Heart right ventricle (tissue), 16 donors: ENCODE measurements at regions of chr19 and their contacts with region 1.

Region 1: GRCh38 chr19:10928525-10929401 is at the starts of genes TIMM29 and YIPF2:
- DNase-seq: peak; percentile 94 to 98
- ATAC-seq: peak; percentile 94 to 98 (median 98)
- H3K4me3 ChIP-seq: peak within 1 kb of the TSS; percentile 88 to 100 (median 98)
- H3K27ac ChIP-seq: peak within 1 kb of the TSS; percentile 65 to 93 (median 87)
- H3K4me1 ChIP-seq: peaks cover 10 to 32% (median 20%) of the 10 kb centered on the region in 9 donors
- H3K27me3 ChIP-seq: no peaks in the 10 kb centered on the region
- CTCF ChIP-seq: no peak
- total RNA-seq, gene TIMM29: 10.8 to 16.1 (median 14.5) TPM
- total RNA-seq, gene YIPF2: 13.7 to 26.0 (median 16.9) TPM

Region 2: GRCh38 chr19:10644260-10645007 is 284.3 kb before region 1 on chr19:
- intact Hi-C with region 1: no loop called
- DNase-seq: peak; percentile 89 to 90
- ATAC-seq: peak; percentile 78 to 95 (median 91)
- H3K4me3 ChIP-seq: no peak overlapping the region
- H3K27ac ChIP-seq: peak overlapping the region; percentile 27 to 69 (median 58)
- H3K4me1 ChIP-seq: peaks cover 6 to 45% (median 27%) of the 10 kb centered on the region in 9 donors
- H3K27me3 ChIP-seq: no peaks in the 10 kb centered on the region
- CTCF ChIP-seq: peak; percentile 76 to 94 (median 88)

Region 3: GRCh38 chr19:10870955-10871603 is 57.7 kb before region 1 on chr19 and contains the start of gene CARM1:
- intact Hi-C with region 1: loop called in 7 of 10 experiments (anchors 5 to 10 kb)
- DNase-seq: peak; percentile 99 to 100
- ATAC-seq: peak; percentile 95 to 97 (median 96)
- H3K4me3 ChIP-seq: peak within 1 kb of the TSS; percentile 55 to 99 (median 70)
- H3K27ac ChIP-seq: peak within 1 kb of the TSS; percentile 64 to 90 (median 80)
- H3K4me1 ChIP-seq: peaks cover 5 to 55% (median 21%) of the 10 kb centered on the region in 9 donors
- H3K27me3 ChIP-seq: no peaks in the 10 kb centered on the region
- CTCF ChIP-seq: peak; percentile 40 to 88 (median 68)
- total RNA-seq, gene CARM1: 25.8 to 45.4 (median 28.8) TPM

Region 4: DNA sequence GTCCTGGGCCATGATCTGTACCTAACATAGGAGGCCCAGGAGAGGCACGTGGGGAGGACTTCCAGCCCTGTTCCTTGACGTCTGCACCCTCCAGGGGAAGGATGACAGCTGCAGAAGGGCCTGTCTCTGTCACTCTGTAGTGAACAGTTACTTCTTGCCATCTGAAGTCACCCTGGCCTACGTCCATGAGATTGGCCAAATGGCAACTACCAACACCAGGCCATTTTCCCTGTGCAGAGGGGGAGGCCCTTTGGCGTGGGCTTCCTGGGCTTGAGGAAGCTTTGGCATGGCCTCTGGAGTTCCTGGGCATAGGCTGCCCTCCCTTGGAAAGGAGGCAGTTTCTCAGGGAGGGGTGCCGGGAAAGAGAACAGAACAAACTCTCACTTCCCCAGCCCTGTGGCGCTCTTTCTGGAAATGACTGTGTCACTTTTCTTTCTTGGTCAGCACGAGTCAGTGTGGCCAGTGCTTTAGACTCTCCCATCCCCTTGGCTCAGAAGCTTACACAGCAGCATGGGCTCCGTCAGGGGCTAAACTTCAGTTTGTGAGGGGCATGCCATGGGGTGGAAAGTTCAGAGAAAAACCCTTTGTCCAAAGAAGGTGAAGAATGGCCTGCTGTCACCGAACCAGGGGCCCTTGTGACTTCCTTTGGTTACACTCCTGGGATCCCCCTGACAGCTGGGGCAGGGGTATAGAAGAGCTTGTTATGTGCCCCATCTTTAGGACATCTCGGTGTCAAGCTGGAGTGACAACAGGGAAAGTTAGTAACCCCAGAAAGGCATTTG is 52.1 kb before region 1 on chr19:
- intact Hi-C with region 1: loop called in 8 of 10 experiments (anchors 5 to 10 kb)
- DNase-seq: peak; percentile 30 to 35
- ATAC-seq: peak; percentile 29 to 80 (median 60)
- H3K4me3 ChIP-seq: no peak overlapping the region
- H3K27ac ChIP-seq: peak overlapping the region in 9 of 10 donors; percentile 14 to 87 (median 66)
- H3K4me1 ChIP-seq: peaks cover 8 to 78% (median 56%) of the 10 kb centered on the region in 9 donors
- H3K27me3 ChIP-seq: no peaks in the 10 kb centered on the region
- CTCF ChIP-seq: no peak

Region 5: GRCh38 chr19:10884274-10884673 is 44.5 kb before region 1 on chr19:
- intact Hi-C with region 1: loop called in 4 of 10 experiments (anchors 5 to 10 kb)
- DNase-seq: no peak
- ATAC-seq: peak in 1 of 8 donors; percentile 24
- H3K4me3 ChIP-seq: no peak overlapping the region
- H3K27ac ChIP-seq: peak overlapping the region in 1 of 10 donors; percentile 2
- H3K4me1 ChIP-seq: peaks cover 0 to 67% (median 43%) of the 10 kb centered on the region in 9 donors
- H3K27me3 ChIP-seq: no peaks in the 10 kb centered on the region
- CTCF ChIP-seq: no peak